ENCODE measurements at regions of chr6 and their contacts with region 1.

Region 1: DNA sequence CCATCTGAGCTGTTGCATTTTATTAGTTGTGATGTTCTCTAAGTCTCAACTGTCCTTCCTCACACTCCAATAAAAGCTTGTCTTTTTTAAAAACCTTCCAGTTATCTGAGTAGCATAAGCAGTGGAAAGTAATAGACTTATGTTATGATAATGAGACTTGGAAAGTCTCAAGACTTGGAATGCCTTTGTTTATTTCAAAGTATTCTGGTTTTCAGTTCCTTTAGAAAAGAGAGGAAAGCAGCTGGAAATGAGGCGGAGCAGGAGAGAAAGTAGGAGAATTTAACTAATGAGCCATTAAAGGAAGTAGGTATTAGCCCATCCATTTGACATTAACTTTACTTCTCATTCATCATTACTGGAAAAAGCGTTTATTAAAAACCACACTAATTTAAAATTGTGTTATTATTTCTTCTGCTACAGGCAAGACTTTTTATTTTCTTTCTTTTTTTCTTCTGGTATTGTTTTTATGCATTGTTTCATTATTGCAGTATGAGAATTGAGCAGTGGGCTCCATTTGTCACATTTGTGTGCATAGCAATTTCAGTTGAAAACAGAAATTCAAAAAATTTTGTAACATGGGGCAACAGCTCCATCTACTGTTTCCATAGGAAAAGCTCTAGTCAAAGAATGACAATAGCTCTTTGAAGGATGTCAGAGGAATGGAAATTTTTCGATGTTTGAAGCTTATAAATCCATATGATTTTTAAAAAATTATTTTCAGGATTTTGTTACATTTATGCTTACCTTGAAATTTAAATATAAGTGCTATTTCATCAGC is 194.8 kb downstream of the COL9A1 start:
- DNase-seq: peak in 1 of 10 donors; percentile 18
- H3K4me3 ChIP-seq: peak overlapping the region in 1 of 59 donors; percentile 13
- H3K27ac ChIP-seq: no peak overlapping the region
- H3K27me3 ChIP-seq: peaks cover 0 to 2% (median 0%) of the 10 kb centered on the region in 45 donors
- CTCF ChIP-seq: peak; percentile 44 to 96 (median 80)

Region 2: GRCh38 chr6:69719602-69720193 is 388.3 kb before region 1 on chr6:
- intact Hi-C with region 1: loop called in 1 of 2 experiments (anchors 10 kb)
- DNase-seq: no peak
- H3K4me3 ChIP-seq: no peak overlapping the region
- H3K27ac ChIP-seq: no peak overlapping the region
- H3K27me3 ChIP-seq: no peaks in the 10 kb centered on the region
- CTCF ChIP-seq: peak in 41 of 56 donors; percentile 9 to 47 (median 33)

Region 3: GRCh38 chr6:69835414-69836179 is 272.4 kb before region 1 on chr6:
- intact Hi-C with region 1: loop called (anchors 5 to 10 kb)
- DNase-seq: peak in 1 of 10 donors; percentile 32
- H3K4me3 ChIP-seq: no peak overlapping the region
- H3K27ac ChIP-seq: no peak overlapping the region
- H3K27me3 ChIP-seq: peaks cover 0 to 2% (median 0%) of the 10 kb centered on the region in 45 donors
- CTCF ChIP-seq: peak; percentile 58 to 88 (median 77)

Region 4: DNA sequence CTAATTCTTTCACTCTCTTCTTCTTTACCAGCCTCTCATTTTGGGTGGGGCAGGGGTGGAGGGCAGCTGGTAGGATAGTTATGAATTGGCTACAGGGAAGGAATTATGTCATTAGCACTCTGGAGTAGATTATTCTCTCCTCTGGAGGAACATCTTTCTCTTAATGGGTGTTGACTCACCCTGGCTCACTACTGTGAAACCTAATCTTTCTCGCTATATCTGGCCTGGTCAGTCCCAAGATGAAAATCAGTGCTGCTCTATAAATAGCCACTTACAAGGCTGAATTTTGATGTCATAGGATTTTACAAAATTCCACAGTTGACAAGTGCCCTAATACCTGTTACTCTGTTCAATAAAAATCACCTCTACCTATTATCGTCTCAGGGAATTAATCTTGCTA is 43.6 kb after region 1 on chr6:
- intact Hi-C with region 1: no loop called
- DNase-seq: no peak
- H3K4me3 ChIP-seq: no peak overlapping the region
- H3K27ac ChIP-seq: no peak overlapping the region
- H3K27me3 ChIP-seq: no peaks in the 10 kb centered on the region
- CTCF ChIP-seq: no peak

Measured in dorsolateral prefrontal cortex (tissue), 120 donors.